ENCODE measurements at regions of chr13 and their contacts with region 1.

Region 1: DNA sequence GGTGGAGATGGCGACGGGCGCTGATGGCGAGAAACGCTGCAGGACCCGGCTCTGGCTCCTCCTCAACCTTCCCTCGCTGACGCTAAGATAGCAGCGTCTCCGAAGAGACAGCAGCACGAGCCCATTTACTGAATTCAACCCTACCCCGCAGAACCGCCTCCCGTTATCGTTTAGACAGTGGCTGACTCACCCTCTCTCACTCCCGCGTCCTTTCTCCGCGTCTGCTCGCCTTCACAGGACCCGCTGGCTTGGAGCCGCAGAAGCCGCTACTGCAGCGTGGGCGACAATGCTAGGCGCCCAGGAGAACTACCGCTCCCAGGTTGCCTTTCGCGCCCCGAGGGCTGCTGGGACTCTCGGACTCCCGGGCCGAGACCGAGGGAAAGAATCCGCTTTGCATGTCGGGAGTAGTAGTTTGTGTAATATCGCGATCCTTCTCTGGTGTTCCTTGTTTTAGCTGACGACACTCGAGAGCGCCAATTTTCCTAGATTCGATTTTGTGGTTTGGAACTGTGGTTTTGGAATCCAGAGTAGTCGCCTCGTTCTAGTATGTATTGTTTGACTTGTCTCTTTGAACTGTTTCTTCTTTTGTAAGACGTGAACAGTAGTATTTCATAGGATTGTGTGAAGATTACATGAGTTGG is at the start of gene KBTBD6:
- DNase-seq: peak; percentile 92
- H3K4me3 Mint-ChIP-seq: peak within 1 kb of the TSS; percentile 93
- H3K27ac Mint-ChIP-seq: peak within 1 kb of the TSS; percentile 92
- H3K4me1 Mint-ChIP-seq: peaks cover 42% of the 10 kb centered on the region
- H3K27me3 Mint-ChIP-seq: no peaks in the 10 kb centered on the region
- total RNA-seq, gene KBTBD6: 5.9 and 6.7 TPM in 2 replicates

Region 2: DNA sequence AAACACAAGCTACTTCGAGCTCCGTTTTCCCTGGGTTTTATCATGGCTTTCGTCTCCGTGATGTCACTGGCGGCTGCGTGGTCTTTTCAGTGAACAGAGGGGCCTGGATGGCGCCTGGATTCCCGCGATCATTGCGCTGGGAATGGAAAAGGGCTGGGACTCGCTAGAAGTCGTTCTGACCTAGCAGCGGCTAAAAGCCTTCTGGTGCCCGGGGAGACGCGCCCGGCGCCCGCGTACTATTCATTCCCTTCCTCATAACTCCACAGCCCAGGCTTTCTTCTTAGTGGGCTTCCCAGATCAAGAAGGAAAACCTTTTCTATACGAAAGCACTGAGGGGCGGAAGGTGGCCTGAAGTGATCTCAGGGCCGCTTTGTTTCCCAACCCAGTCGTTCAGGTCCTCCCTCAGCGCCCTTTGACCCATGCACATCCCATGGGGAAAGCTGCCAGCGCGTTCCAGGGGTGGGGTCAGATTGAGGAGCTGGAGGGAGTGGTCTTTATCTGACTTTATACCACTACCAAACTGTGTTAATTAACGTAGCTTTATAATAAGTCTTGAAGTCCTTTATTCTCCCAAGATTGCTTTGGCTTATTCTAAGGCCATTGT is 210.1 kb before region 1 on chr13:
- intact Hi-C with region 1: loop called (anchors 2 kb)
- DNase-seq: no peak
- H3K4me3 Mint-ChIP-seq: peak overlapping the region; percentile 70
- H3K27ac Mint-ChIP-seq: peak overlapping the region; percentile 68
- H3K4me1 Mint-ChIP-seq: peaks cover 9% of the 10 kb centered on the region
- H3K27me3 Mint-ChIP-seq: no peaks in the 10 kb centered on the region

Region 3: GRCh38 chr13:41178040-41178439 is 45.4 kb after region 1 on chr13:
- intact Hi-C with region 1: loop called (anchors 5 kb)
- DNase-seq: no peak
- H3K4me3 Mint-ChIP-seq: no peak overlapping the region
- H3K27ac Mint-ChIP-seq: no peak overlapping the region
- H3K4me1 Mint-ChIP-seq: peaks cover 10% of the 10 kb centered on the region
- H3K27me3 Mint-ChIP-seq: no peaks in the 10 kb centered on the region

Region 4: DNA sequence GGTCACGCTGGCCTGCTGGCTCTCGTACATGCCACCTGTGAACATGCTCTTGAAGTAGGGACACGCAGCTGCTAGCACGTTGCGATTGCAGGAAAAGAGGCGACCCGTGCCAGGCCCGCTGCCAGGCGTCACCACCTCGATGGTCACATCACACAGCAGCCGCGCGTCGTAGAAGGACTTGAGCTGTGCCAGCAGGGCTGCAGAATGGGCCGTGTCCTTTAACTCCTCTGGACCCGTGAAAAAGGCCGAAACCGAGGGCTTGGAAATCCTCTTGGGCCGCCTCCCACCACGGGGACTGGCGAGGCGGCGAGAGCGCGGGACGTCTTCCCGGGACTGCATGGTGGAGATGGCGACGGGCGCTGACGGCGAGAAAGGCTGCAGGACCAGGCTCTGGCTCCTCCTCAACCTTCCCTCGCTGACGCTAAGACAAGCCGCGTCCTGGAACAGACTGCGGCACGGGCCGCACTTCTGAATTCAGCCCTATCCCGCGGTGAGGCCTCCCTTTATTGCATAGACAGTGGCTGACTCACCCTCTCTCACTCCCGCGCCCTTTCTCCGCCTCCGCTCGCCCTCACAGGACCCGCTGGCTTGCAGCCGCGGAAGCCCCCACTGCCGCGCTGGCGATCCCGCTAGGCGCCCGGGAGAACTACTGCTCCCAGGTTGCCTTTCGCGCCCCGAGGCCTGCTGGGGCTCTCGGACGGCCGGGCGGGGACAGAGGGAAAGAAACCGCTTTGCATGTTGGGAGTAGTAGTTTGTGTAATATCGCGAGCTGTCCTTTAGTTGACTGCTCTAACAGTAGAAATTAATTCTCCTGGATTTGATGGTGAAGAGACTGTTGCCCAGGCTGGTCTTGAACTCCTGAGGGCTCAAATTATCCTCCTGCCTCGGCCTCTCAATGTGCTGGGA is 61.5 kb after region 1 on chr13 and contains the start of gene KBTBD7:
- intact Hi-C with region 1: loop called (anchors 1 kb)
- DNase-seq: peak; percentile 88
- H3K4me3 Mint-ChIP-seq: peak within 1 kb of the TSS; percentile 85
- H3K27ac Mint-ChIP-seq: peak within 1 kb of the TSS; percentile 91
- H3K4me1 Mint-ChIP-seq: peaks cover 40% of the 10 kb centered on the region
- H3K27me3 Mint-ChIP-seq: no peaks in the 10 kb centered on the region
- total RNA-seq, gene KBTBD7: 5.1 and 5.8 TPM in 2 replicates

Region 5: DNA sequence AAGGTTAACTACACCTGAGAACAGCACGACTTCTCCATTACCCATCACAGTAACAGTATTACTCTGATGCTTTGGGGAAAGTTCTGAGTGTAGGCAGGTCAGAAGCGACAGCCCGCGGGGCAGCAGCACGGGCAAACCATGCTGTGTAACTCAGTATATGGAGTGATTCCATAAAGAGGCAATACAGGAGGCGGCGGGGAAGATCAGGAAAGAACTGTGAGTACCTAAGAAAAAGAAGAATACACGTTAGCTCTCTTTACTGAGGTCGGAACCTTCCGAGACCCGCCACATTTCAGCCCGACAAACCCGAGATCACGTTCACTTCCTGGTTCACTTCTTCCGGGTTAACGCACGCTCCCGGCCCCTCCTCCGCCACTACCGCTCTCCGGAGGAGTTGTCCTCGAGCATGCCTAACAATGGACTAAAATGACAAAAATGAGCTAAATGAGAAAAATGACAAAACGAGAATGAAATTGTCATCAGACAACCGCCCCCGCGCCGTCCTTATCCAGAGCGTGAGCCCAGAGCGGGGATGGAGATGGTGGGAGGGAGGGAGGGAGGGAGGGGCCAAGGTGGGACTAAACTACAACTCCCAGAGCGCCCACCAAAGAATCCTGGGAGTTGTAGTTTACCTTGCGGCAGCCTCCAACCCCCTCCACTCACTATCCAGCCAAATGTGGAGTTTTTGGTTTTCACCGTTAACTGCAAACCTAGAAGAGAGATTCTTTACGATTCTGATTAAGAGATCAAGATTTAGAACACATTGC is 130.8 kb after region 1 on chr13 and contains the start of gene MTRF1:
- intact Hi-C with region 1: loop called (anchors 1 kb)
- DNase-seq: peak; percentile 78
- H3K4me3 Mint-ChIP-seq: peak within 1 kb of the TSS; percentile 99
- H3K27ac Mint-ChIP-seq: peak within 1 kb of the TSS; percentile 99
- H3K4me1 Mint-ChIP-seq: peaks cover 6% of the 10 kb centered on the region
- H3K27me3 Mint-ChIP-seq: no peaks in the 10 kb centered on the region
- total RNA-seq, gene MTRF1: 18.7 and 19.9 TPM in 2 replicates

Region 6: GRCh38 chr13:41310963-41311606 is 178.5 kb after region 1 on chr13 and contains the start of gene NAA16:
- intact Hi-C with region 1: loop called (anchors 1 kb)
- DNase-seq: peak; percentile 91
- H3K4me3 Mint-ChIP-seq: peak within 1 kb of the TSS; percentile 94
- H3K27ac Mint-ChIP-seq: peak within 1 kb of the TSS; percentile 89
- H3K4me1 Mint-ChIP-seq: peaks cover 29% of the 10 kb centered on the region
- H3K27me3 Mint-ChIP-seq: no peaks in the 10 kb centered on the region
- total RNA-seq, gene NAA16: 27.9 and 28.5 TPM in 2 replicates

Measured in activated T-helper 2 cell treated with anti-CD3 and anti-CD28 coated beads, Interferon-gamma antibody, Interleukin-2, Interleukin-4, amounts not matched to agents 10 μg/mL and 5 μg/mL and 100 μg/mL, durations not matched to agents 14 hours and 24 hours and 36 hours (primary cell).